ENCODE measurements at regions of chr3 and their contacts with region 1.

Region 1: GRCh38 chr3:52220380-52221026 is 4.9 kb downstream of the TLR9 start:
- DNase-seq: peak; percentile 46
- H3K4me3 ChIP-seq: no peak overlapping the region
- CTCF ChIP-seq: peak; percentile 94

Region 2: GRCh38 chr3:51282931-51283330 is 937.6 kb before region 1 on chr3:
- in situ Hi-C with region 1: no loop called
- DNase-seq: peak; percentile 13
- H3K4me3 ChIP-seq: no peak overlapping the region
- CTCF ChIP-seq: no peak

Region 3: DNA sequence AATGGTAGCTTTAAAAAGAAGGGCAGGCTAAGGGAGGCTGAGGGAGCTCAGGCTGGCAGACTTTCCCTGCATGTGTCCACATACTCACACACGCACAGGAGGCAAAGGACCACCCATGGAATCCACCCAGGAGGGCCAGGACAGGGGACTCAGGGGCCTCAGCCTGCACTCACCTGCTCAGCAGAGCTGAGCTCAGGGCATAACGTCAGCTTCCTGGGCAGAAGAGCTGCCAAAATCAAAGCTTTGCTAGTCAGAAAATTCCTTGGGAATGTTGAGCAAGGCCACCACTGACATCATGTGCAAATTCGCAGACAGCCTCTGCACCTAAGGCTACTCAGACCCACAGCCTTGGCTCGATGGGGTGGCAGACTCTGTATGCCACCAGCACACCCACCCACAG is 39.0 kb before region 1 on chr3:
- in situ Hi-C with region 1: loop called (anchors 5 kb)
- DNase-seq: no peak
- H3K4me3 ChIP-seq: no peak overlapping the region
- CTCF ChIP-seq: no peak

Measured in astrocyte of the cerebellum (primary cell).